ENCODE measurements at regions of chr21 and their contacts with region 1.

Region 1: DNA sequence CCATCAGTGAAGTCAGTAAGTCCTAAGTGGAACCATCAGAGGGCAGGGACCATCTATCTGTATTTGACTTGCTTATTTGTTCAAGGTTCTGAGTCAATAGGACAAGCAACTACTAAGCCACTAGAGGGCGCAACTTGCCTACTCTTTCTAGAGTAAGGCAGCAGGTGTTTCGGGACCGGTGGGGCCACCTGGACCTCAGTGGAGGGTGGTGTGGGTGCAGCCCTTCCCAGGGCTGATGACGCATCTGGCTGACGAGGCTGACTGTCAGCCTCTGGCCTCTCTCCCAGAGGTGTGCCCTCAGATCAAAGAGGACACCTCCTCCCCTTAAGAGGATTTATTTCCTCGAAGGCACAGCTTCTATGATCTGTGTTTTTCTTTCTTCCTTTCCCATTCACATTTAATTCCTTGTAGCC is 6.6 kb downstream of the CBR3 start:
- DNase-seq: peak; percentile 77 to 85
- ATAC-seq: peak; percentile 94 to 98
- H3K4me3 ChIP-seq: no peak overlapping the region
- H3K27ac ChIP-seq: no peak overlapping the region
- H3K4me1 ChIP-seq: peaks cover 0 to under 1% of the 10 kb centered on the region in 2 donors
- H3K27me3 ChIP-seq: no peaks in the 10 kb centered on the region
- CTCF ChIP-seq: peak; percentile 79 to 87 (median 85)
- POLR2A ChIP-seq: no peak

Region 2: DNA sequence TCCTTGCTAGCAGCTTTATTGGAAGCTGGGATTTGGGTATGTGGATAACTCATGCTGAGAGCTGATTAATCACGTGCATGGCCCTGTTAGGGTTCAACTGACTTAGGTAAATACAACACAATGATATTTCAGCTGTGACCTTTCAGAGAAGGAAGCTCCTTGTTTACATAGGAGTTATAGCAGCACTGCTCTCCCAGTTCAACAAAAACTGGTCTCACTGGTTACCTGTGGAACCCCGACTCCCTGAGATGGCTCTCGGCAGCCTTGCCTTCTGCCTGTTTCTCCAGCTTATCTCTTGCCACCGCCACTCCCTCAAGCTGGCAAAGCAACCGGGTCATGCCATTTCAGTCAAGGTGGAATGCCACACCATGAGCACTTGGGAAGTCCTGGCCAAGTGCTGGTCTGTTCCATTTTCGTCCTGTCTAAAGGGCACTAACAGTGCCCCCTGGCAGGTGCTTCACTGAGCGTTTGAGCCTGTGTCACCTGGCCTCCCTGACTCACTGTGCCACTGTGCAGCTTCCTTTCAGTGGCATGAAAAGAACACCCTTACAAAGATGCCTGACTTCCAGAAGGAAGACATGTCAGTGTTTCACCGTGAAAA is 46.7 kb after region 1 on chr21:
- in situ Hi-C with region 1: no loop called
- intact Hi-C with region 1: loop called (anchors 1 kb)
- DNase-seq: peak; percentile 84 to 95
- ATAC-seq: peak; percentile 97 to 98
- H3K4me3 ChIP-seq: no peak overlapping the region
- H3K27ac ChIP-seq: peak overlapping the region; percentile 68 to 79 (median 74)
- H3K4me1 ChIP-seq: peaks cover 13 to 23% of the 10 kb centered on the region in 2 donors
- H3K27me3 ChIP-seq: no peaks in the 10 kb centered on the region
- CTCF ChIP-seq: no peak
- POLR2A ChIP-seq: no peak

Region 3: DNA sequence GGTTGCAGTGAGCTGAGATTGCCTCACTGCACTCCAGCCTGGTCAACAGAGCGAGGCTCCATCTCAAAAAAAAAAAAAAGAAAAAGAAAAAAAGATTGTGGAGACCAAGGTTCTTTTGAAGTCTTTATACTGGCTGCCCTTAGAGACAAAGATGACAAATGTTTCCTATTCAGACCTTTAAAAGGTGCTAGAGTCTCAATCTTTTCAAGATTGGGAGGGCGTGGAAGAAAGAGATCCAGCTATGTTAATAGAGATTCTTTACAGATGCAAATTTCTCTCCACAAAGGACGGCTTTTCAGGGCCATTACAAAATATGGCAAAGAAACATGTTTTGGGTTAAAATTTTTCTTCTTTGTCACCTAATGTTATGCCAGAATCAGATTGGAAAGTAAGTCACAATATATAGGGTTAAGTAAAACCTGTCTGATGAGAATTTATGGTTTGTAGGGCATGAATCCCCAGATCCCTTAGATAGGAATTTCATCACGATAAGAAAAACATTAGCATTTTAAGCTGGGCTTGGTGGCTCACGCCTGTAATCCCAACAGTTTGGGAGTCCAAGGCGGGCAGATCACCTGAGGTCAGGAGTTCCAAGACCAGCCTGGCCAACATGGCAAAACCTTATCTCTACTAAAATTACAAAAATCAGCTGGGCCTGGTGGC is 165.5 kb after region 1 on chr21:
- in situ Hi-C with region 1: no loop called
- intact Hi-C with region 1: no loop called
- DNase-seq: no peak
- ATAC-seq: no peak
- H3K4me3 ChIP-seq: no peak overlapping the region
- H3K27ac ChIP-seq: no peak overlapping the region
- H3K4me1 ChIP-seq: no peaks in the 10 kb centered on the region
- H3K27me3 ChIP-seq: no peaks in the 10 kb centered on the region
- CTCF ChIP-seq: no peak
- POLR2A ChIP-seq: no peak

Region 4: DNA sequence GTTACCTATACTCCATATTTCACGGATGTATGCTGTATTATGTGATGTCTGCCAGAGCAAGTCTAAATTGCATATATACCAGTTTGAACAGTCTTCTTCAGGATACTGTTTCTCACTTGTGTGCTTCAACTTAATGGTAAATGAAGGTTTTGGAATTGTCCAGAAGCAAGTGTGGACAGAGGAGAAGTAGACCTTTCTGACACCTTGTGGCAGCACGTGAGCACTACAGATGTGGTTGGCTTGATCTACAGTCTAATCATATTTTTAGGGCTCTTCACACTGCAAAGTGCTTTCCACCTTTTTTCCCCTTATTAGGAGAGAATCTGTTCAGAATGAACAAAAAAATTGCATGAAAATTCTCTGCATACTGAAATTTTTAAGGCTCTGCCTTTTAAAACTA is 189.4 kb after region 1 on chr21:
- in situ Hi-C with region 1: loop called in 3 of 4 experiments (anchors 10 kb)
- intact Hi-C with region 1: loop called (anchors 1 kb)
- DNase-seq: no peak
- ATAC-seq: peak; percentile 69 to 85
- H3K4me3 ChIP-seq: no peak overlapping the region
- H3K27ac ChIP-seq: peak overlapping the region in 2 of 4 donors; percentile 42 to 56
- H3K4me1 ChIP-seq: peaks cover 45 to 54% of the 10 kb centered on the region in 2 donors
- H3K27me3 ChIP-seq: no peaks in the 10 kb centered on the region
- CTCF ChIP-seq: peak; percentile 41 to 76 (median 65)
- POLR2A ChIP-seq: no peak

Measured in gastrocnemius medialis (tissue), 4 donors.